ENCODE measurements at regions of chr9 and their contacts with region 1.

Region 1: GRCh38 chr9:97921959-97922724 is at the start of gene TRMO:
- DNase-seq: peak; percentile 94
- CTCF ChIP-seq: peak; percentile 67

Region 2: DNA sequence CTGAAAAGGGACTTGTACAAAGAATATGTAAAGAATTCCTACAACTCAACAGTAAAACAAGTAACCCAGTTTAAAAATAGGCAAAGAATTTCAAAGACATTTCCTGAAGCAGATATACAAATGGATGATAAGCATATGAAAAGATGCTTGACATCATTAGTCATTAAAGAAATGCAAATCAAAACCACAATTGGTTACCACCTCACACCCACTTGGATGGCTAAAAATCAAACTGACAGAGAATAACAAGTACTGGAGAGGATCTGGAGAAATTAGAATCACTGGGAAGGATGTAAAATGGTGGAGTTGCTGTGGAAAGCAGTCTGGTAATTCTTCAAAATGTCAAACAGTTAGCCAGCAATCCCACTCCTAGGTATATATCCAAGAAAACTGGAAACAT is 81.6 kb before region 1 on chr9:
- CTCF ChIA-PET with region 1: no interaction called
- POLR2A ChIA-PET with region 1: no interaction called
- DNase-seq: no peak
- CTCF ChIP-seq: no peak

Region 3: GRCh38 chr9:97890038-97890437 is 32.1 kb before region 1 on chr9:
- CTCF ChIA-PET with region 1: interaction called, 11 read pairs
- POLR2A ChIA-PET with region 1: interaction called, 8 read pairs
- DNase-seq: peak; percentile 65
- CTCF ChIP-seq: peak; percentile 66

Region 4: DNA sequence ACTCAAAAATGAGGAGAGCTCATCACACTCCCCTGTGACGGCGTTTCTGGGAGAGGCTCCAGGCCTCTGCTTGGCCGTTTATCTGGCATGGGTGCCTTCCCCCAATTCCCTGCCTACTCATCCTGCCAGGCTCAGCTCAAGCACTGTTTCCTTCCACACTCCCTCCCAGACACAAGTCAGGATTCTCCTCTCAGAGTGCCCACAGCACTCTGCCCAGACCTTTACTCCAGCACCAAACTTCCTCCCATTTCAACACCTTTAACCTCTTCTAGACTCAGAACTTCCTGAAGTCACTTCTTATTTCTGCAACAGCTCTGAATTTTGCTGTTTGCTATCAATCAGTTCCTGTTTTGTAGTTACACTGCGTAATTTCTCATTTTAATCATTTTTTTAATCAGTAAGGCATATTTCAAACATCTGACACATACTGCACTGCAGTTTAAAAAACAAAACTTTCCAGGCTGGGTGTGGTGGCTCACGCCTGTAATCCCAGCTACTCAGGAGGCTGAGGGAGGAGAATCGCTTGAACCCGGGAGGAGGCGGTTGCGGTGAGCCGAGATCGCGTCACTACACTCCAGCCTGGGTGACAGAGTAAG is 15.8 kb before region 1 on chr9:
- CTCF ChIA-PET with region 1: interaction called, 69 read pairs
- POLR2A ChIA-PET with region 1: no interaction called
- DNase-seq: no peak
- CTCF ChIP-seq: no peak

Region 5: GRCh38 chr9:97954550-97954989 is 32.4 kb after region 1 on chr9:
- CTCF ChIA-PET with region 1: interaction called, 21 read pairs
- POLR2A ChIA-PET with region 1: no interaction called
- DNase-seq: peak; percentile 70
- CTCF ChIP-seq: peak; percentile 66

Region 6: DNA sequence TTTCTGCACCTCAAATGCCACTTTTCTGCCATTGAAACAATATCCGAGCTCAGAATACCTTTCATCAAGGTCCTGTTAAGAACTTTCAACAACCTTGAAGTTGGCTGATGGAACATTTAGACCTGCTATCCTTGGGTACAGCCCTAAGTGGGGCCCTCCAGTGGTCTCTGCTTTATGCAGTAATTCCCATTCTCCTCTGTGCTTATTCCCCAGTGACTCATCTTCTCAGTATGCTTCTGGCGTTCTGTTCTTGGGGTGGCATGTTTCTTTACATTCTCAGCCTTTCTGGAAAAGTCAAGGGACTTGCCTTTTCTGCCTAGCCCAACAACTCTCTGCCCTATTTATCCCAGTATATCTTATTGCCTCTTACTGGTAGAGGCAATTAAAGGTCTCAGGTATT is 68.1 kb after region 1 on chr9:
- CTCF ChIA-PET with region 1: interaction called, 13 read pairs
- POLR2A ChIA-PET with region 1: no interaction called
- DNase-seq: no peak
- CTCF ChIP-seq: no peak

Region 7: DNA sequence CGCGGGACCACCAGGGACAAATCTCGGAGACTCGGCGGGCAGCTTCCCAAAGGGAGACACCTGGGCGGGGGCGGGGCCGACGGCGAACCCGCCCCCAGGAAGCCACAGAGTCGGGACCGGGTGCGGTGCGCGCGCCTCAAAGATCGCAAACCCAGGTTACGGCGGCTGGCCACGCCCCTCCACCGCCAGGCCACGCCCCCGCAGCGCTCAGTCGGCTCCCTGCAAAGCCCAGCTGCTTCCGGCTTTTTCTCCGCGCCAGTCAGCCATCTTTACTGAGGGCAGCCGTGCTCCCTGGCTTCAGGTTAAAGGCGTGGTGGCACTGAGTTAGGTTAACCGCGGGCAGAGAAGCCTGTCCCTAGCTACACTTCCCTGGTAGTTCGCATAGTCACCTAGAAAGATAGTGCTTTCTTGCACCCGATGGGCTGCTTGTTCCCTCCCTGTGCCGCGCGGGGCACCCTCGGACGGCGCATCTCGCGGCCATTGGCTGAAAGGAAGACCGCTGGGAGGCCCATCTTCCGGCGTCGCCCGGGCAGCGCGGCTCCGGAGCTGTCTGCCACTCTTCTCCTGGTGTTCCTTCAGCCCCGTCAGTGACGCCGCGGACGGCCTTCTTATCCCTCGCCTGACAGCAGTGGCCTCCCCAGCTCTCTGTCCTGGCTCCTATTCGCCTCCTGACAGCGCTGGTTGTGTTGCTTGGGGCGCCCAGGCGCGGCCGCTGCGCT is 333.6 kb after region 1 on chr9 and contains the start of gene TBC1D2:
- CTCF ChIA-PET with region 1: interaction called, 21 read pairs
- POLR2A ChIA-PET with region 1: no interaction called
- DNase-seq: peak; percentile 99
- CTCF ChIP-seq: no peak

Region 8: DNA sequence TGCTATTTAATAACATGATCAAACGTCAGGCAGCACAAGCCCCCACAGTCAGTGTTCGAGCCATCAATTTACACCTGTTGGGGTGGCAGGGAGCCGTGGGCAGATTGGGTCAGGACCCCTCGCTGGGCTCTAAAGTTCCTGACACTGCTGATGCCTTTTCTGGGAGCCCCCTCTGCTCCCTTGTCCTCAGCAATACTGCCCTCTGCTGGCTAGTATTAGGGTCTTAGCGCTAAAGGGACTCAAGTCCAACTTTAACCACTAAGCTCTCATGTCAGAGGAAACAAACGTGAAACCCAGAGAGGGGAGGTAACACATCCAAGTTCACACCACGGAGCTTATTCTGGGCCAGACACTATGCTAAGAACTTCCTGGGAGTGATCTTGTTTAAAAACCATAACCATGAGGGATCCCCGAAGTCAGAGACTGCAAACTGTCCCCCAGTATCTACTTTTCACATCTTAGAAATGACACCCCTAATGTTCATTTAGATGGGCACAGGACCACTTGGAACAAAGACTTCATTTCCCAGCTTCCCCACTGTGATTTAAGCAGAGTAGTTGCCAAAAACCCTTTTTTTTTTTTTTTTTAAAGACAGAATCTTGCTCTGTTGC is 853.8 kb after region 1 on chr9:
- CTCF ChIA-PET with region 1: interaction called, 17 read pairs
- POLR2A ChIA-PET with region 1: no interaction called
- DNase-seq: peak; percentile 77
- CTCF ChIP-seq: peak; percentile 77